Brain microvascular endothelial cell (primary cell): ENCODE measurements at regions of chr20 and their contacts with region 1.

Region 1: DNA sequence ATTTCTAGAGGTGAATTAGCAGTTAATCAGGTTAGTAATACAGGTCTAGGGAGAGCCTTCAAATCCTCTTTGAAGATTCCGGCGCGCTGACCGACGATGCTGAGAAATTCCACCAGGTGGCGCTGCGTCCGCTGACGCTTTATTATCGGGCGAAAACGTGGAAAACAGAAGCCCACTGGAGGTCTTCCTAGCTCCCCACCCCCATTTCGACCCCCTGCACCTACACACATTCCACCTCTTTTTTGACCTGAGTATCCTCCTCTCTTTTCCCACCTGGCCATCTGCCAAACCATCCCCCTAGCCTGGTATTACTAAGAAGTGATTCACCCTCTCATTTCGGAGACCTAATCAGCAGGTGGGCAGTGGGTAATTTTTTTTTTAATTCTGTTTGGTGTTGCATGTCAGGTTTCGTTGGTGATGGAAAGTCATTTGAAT is 65.4 kb upstream of the RIN2 start:
- DNase-seq: peak; percentile 40
- H3K4me3 ChIP-seq: peak overlapping the region; percentile 15
- H3K27ac ChIP-seq: no peak overlapping the region
- H3K27me3 ChIP-seq: no peaks in the 10 kb centered on the region
- CTCF ChIP-seq: peak; percentile 92

Region 2: GRCh38 chr20:19067986-19068385 is 624.7 kb before region 1 on chr20:
- in situ Hi-C with region 1: no loop called
- DNase-seq: no peak
- H3K4me3 ChIP-seq: no peak overlapping the region
- H3K27ac ChIP-seq: no peak overlapping the region
- H3K27me3 ChIP-seq: no peaks in the 10 kb centered on the region
- CTCF ChIP-seq: no peak

Region 3: DNA sequence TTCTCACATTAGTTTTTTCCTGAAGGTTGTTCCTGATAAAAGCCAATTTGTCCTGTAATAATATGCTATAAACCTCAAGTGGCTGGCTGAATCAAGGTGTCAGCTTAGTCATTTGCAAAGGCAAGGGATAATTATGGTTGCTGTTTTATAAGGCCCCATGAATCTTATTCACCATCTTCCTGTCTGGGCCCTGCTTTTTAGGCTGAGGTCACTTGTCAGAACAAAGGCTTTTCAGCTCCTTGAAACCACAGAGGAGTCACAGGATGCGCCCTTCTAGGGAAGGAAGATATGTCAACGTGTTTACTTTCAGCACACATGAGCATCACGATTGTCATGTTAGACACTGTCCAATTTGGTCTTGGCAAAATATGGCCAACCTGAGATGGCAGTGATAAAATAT is 259.7 kb after region 1 on chr20:
- in situ Hi-C with region 1: no loop called
- DNase-seq: no peak
- H3K4me3 ChIP-seq: no peak overlapping the region
- H3K27ac ChIP-seq: no peak overlapping the region
- H3K27me3 ChIP-seq: no peaks in the 10 kb centered on the region
- CTCF ChIP-seq: no peak

Region 4: GRCh38 chr20:19995220-19995863 is 302.6 kb after region 1 on chr20:
- in situ Hi-C with region 1: loop called (anchors 25 kb)
- DNase-seq: no peak
- H3K4me3 ChIP-seq: no peak overlapping the region
- H3K27ac ChIP-seq: no peak overlapping the region
- H3K27me3 ChIP-seq: no peaks in the 10 kb centered on the region
- CTCF ChIP-seq: peak; percentile 82